Dorsolateral prefrontal cortex (tissue), 120 donors: ENCODE measurements at regions of chr20 and their contacts with region 1.

Region 1: DNA sequence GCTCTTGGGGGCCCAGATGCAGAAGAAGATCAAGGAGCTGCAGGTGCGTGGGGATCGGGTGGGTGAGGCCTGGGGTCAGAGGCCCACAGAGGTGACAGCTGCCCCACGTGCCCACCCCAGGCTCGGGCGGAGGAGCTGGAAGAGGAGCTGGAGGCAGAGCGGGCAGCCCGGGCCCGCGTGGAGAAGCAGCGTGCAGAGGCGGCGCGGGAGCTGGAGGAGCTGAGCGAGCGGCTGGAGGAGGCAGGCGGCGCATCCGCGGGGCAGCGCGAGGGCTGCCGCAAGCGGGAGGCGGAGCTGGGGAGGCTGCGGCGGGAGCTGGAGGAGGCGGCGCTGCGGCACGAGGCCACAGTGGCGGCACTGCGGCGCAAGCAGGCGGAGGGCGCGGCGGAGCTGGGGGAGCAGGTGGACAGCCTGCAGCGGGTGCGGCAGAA is 41.5 kb downstream of the MYH7B start:
- DNase-seq: peak; percentile 39 to 86 (median 74)
- H3K4me3 ChIP-seq: peak overlapping the region in 42 of 59 donors; percentile 10 to 49 (median 30)
- H3K27ac ChIP-seq: peak overlapping the region in 58 of 59 donors; percentile 33 to 91 (median 81)
- H3K27me3 ChIP-seq: no peaks in the 10 kb centered on the region
- CTCF ChIP-seq: peak in 29 of 56 donors; percentile 13 to 53 (median 27)

Region 2: DNA sequence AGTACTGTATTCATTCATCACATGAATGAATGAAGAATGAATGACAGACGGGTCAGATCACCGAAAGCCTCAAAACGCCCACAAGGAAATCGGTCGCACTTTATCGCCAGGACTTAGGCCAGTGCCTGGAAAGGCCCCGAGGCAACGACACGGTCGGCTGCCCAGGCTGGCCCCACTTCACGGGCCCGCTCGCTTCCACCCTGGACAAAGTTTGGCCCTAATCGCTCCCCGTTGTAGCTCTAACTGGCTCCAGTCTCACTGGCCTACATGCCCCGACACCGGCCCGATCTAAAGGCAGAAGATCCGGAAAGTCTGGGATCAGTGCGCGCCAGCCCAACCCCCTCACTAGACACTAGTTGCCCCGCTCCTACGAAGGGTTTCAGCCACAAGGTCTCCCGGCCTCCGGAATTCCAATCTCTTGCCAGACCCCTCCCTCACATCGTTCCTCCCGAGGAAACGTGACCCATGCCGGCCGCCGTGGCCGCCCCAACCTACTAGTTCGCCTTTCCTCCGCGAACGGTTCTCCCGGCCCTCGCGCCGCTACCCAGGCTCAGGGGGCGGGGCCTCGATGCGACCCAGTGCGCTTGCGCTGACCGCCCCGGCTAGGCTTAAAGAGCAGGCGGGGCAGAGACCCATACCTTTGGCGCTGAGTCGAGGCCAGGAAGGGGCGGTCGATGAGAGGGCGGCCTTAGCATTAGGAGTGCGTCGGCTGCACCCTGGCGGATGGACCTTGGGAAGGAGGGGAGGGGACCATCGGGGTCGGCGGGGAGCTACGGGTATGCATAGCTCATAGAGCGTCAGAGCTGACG is 41.7 kb before region 1 on chr20 and contains the starts of genes GSS and MYH7B:
- intact Hi-C with region 1: loop called in 1 of 2 experiments (anchors 5 kb)
- DNase-seq: peak; percentile 94 to 98 (median 96)
- H3K4me3 ChIP-seq: peak within 1 kb of the TSS; percentile 59 to 92 (median 78)
- H3K27ac ChIP-seq: peak within 1 kb of the TSS; percentile 80 to 98 (median 93)
- H3K27me3 ChIP-seq: no peaks in the 10 kb centered on the region
- CTCF ChIP-seq: peak in 38 of 56 donors; percentile 6 to 72 (median 46)
- total RNA-seq, gene GSS: 16.3 to 49.2 (median 35.7) TPM
- total RNA-seq, gene MYH7B: 8.0 to 38.2 (median 21.1) TPM

Region 3: GRCh38 chr20:35207950-35208611 is 210.9 kb after region 1 on chr20:
- intact Hi-C with region 1: loop called in 1 of 2 experiments (anchors 5 kb)
- DNase-seq: peak in 9 of 10 donors; percentile 48 to 84 (median 74)
- H3K4me3 ChIP-seq: peak overlapping the region in 7 of 59 donors; percentile 2 to 28 (median 10)
- H3K27ac ChIP-seq: peak overlapping the region in 48 of 59 donors; percentile 1 to 88 (median 55)
- H3K27me3 ChIP-seq: no peaks in the 10 kb centered on the region
- CTCF ChIP-seq: peak; percentile 63 to 91 (median 84)

Region 4: GRCh38 chr20:35541783-35542588 is 544.8 kb after region 1 on chr20 and contains the start of gene ERGIC3:
- intact Hi-C with region 1: no loop called
- DNase-seq: peak; percentile 89 to 96 (median 94)
- H3K4me3 ChIP-seq: peak within 1 kb of the TSS; percentile 73 to 99 (median 91)
- H3K27ac ChIP-seq: peak within 1 kb of the TSS in 36 of 59 donors; percentile 10 to 86 (median 61)
- H3K27me3 ChIP-seq: no peaks in the 10 kb centered on the region
- CTCF ChIP-seq: peak in 52 of 56 donors; percentile 16 to 70 (median 48)
- total RNA-seq, gene ERGIC3: 88.7 to 138 (median 107) TPM